SK-N-SH (cell line): ENCODE measurements at regions of chr18 and their contacts with region 1.

Region 1: DNA sequence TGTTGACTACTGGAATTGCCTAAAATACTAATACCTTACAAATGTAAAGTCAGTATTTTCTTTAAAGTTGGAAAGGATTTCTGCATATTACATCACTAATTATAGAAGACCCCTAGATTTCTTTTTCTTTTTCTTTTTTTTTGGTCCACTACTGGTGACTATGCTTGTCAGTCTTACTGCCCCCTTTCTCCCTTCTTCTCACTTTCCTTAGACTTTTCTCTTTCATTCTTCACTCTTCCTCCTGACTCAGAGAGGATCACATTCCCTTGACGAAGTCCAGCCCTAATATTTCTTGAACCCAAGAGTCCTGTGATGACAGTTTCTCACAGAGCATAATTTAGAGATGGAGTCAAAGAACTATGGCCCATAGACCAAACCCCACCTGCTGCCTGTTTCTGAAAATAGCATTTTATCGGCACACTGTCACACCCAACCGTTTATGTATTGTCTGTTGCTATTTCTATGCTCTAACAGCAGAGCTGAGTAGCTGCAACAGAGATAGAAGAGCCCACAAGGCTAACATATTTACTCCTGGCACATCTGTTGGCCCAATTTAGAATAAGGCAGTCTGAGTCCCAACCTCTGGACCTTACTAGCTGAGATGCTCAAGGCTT is 40.6 kb upstream of the RIOK3 start:
- DNase-seq: no peak
- H3K4me3 ChIP-seq: no peak overlapping the region
- H3K27ac ChIP-seq: no peak overlapping the region
- H3K4me1 ChIP-seq: no peaks in the 10 kb centered on the region
- H3K27me3 ChIP-seq: no peaks in the 10 kb centered on the region
- CTCF ChIP-seq: no peak
- EP300 ChIP-seq: no peak
- RAD21 ChIP-seq: no peak

Region 2: GRCh38 chr18:22813648-22814328 is 598.7 kb before region 1 on chr18:
- CTCF ChIA-PET with region 1: interaction called, 11 read pairs
- POLR2A ChIA-PET with region 1: no interaction called
- DNase-seq: peak; percentile 43
- H3K4me3 ChIP-seq: no peak overlapping the region
- H3K27ac ChIP-seq: no peak overlapping the region
- H3K4me1 ChIP-seq: peaks cover 4% of the 10 kb centered on the region in 2 experiments; a peak in 2 of 4 replicates
- H3K27me3 ChIP-seq: peaks cover 12% of the 10 kb centered on the region; the same call in 1 of the 2 replicates
- CTCF ChIP-seq: peak; percentile 65
- EP300 ChIP-seq: no peak
- RAD21 ChIP-seq: peak; percentile 93

Region 3: DNA sequence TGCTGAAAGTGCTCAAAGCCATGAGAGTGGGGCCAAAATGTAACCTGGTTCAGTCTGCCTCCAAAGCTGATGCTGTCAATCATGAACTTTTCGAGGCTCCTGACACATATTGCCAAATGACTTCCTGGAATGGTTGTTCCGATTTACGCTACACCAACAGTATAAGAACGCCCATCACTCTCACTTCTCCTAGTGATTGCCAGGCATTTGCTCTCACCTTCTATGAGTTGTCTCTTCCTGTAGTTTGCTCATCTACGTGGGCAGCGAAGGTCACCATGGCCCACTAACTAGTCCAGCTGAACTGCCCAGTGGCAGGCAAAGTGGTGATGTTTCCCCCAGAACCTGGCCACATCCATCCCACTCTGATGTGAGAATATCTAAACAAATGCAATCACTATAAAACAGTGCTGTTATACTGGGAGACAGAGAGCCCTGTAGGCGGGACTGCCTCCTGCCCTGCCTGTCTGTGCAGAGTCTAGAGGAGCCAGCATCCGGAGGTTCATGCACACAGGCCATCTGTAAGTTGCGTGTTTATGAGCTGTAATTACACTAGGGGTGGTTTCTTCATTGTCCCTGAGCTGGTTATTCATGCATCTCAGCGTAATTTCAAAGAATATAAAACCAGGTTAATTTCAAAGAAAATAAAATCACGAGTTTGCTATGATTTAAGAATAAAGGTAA is 285.9 kb before region 1 on chr18:
- CTCF ChIA-PET with region 1: interaction called, 43 read pairs
- POLR2A ChIA-PET with region 1: no interaction called
- DNase-seq: no peak
- H3K4me3 ChIP-seq: no peak overlapping the region
- H3K27ac ChIP-seq: no peak overlapping the region
- H3K4me1 ChIP-seq: no peaks in the 10 kb centered on the region; a peak in 1 of 4 replicates
- H3K27me3 ChIP-seq: no peaks in the 10 kb centered on the region
- CTCF ChIP-seq: no peak
- EP300 ChIP-seq: no peak
- RAD21 ChIP-seq: no peak

Region 4: GRCh38 chr18:23377669-23378301 is 34.7 kb before region 1 on chr18:
- CTCF ChIA-PET with region 1: interaction called, 23 read pairs
- POLR2A ChIA-PET with region 1: no interaction called
- DNase-seq: no peak
- H3K4me3 ChIP-seq: no peak overlapping the region
- H3K27ac ChIP-seq: peak overlapping the region in 1 of 2 experiments; percentile 82; a peak in 2 of 4 replicates
- H3K4me1 ChIP-seq: peaks cover 0 to 30% of the 10 kb centered on the region in 2 experiments; a peak in 1 of 4 replicates
- H3K27me3 ChIP-seq: no peaks in the 10 kb centered on the region
- CTCF ChIP-seq: no peak
- EP300 ChIP-seq: peak in 1 of 2 experiments; percentile 58; a peak in 2 of 4 replicates
- RAD21 ChIP-seq: no peak

Region 5: GRCh38 chr18:23422672-23423418 is 10.4 kb after region 1 on chr18:
- CTCF ChIA-PET with region 1: interaction called, 11 read pairs
- POLR2A ChIA-PET with region 1: no interaction called
- DNase-seq: peak; percentile 21
- H3K4me3 ChIP-seq: no peak overlapping the region
- H3K27ac ChIP-seq: peak overlapping the region in 1 of 2 experiments; percentile 34; a peak in 1 of 4 replicates
- H3K4me1 ChIP-seq: peaks cover 0 to 9% of the 10 kb centered on the region in 2 experiments; a peak in 1 of 4 replicates
- H3K27me3 ChIP-seq: no peaks in the 10 kb centered on the region
- CTCF ChIP-seq: no peak
- EP300 ChIP-seq: no peak
- RAD21 ChIP-seq: no peak

Region 6: GRCh38 chr18:23605938-23606337 is 193.5 kb after region 1 on chr18:
- CTCF ChIA-PET with region 1: no interaction called
- POLR2A ChIA-PET with region 1: no interaction called
- DNase-seq: no peak
- H3K4me3 ChIP-seq: no peak overlapping the region
- H3K27ac ChIP-seq: no peak overlapping the region
- H3K4me1 ChIP-seq: no peaks in the 10 kb centered on the region
- H3K27me3 ChIP-seq: no peaks in the 10 kb centered on the region
- CTCF ChIP-seq: no peak
- EP300 ChIP-seq: no peak
- RAD21 ChIP-seq: no peak